Activated CD8-positive, alpha-beta T cell treated with anti-CD3 and anti-CD28 coated beads, Interleukin-2, amount 10 ng/mL, durations not matched to agents 7 days and 5 days (primary cell): ENCODE measurements at regions of chr11 and their contacts with region 1.

Region 1: GRCh38 chr11:27698872-27699474 is 1.3 kb downstream of the BDNF start:
- DNase-seq: peak; percentile 77
- ATAC-seq: peak; percentile 78
- H3K4me3 Mint-ChIP-seq: peak overlapping the region; percentile 23
- H3K27ac Mint-ChIP-seq: no peak overlapping the region
- H3K4me1 Mint-ChIP-seq: peaks cover 24% of the 10 kb centered on the region
- H3K27me3 Mint-ChIP-seq: peaks cover 54% of the 10 kb centered on the region

Region 2: DNA sequence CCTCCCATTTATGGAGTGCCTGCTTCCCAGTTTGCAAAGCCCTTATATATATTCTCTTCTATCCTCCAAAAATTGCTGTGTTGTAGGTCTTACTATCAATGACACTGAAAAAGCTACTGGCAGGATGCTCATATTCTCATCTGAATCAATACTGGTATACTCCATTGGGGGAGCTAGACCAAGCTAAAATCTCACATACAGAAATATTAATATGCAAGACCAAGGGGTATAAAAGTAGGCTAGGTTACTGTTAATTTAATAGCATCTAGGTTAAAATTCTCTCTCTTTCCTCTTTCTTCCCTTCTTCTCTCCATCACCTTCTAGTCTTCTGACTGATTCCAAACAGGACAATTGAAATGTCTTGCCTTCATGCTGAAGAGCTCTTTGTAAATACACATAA is 18.4 kb after region 1 on chr11:
- CTCF ChIA-PET with region 1: interaction called, 18 read pairs
- POLR2A ChIA-PET with region 1: no interaction called
- DNase-seq: no peak
- ATAC-seq: no peak
- H3K4me3 Mint-ChIP-seq: no peak overlapping the region
- H3K27ac Mint-ChIP-seq: no peak overlapping the region
- H3K4me1 Mint-ChIP-seq: peaks cover 8% of the 10 kb centered on the region
- H3K27me3 Mint-ChIP-seq: peaks cover 50% of the 10 kb centered on the region

Region 3: GRCh38 chr11:28529540-28530410 is 830.8 kb after region 1 on chr11:
- CTCF ChIA-PET with region 1: interaction called, 38 read pairs
- POLR2A ChIA-PET with region 1: no interaction called
- DNase-seq: no peak
- ATAC-seq: no peak
- H3K4me3 Mint-ChIP-seq: no peak overlapping the region
- H3K27ac Mint-ChIP-seq: no peak overlapping the region
- H3K4me1 Mint-ChIP-seq: no peaks in the 10 kb centered on the region
- H3K27me3 Mint-ChIP-seq: no peaks in the 10 kb centered on the region